Left ventricle myocardium inferior (tissue), 1 donor: ENCODE measurements at regions of chr12 and their contacts with region 1.

Region 1: GRCh38 chr12:38324896-38325295 is 8.3 kb downstream of the ALG10B start:
- DNase-seq: no peak
- H3K4me3 ChIP-seq: no peak overlapping the region
- H3K27ac ChIP-seq: no peak overlapping the region
- H3K4me1 ChIP-seq: peaks cover 4% of the 10 kb centered on the region
- H3K27me3 ChIP-seq: no peaks in the 10 kb centered on the region
- CTCF ChIP-seq: no peak

Region 2: GRCh38 chr12:38911611-38912010 is 586.7 kb after region 1 on chr12:
- intact Hi-C with region 1: loop called (anchors 10 kb)
- DNase-seq: no peak
- H3K4me3 ChIP-seq: no peak overlapping the region
- H3K27ac ChIP-seq: no peak overlapping the region
- H3K4me1 ChIP-seq: peaks cover 8% of the 10 kb centered on the region
- H3K27me3 ChIP-seq: no peaks in the 10 kb centered on the region
- CTCF ChIP-seq: peak; percentile 37

Region 3: DNA sequence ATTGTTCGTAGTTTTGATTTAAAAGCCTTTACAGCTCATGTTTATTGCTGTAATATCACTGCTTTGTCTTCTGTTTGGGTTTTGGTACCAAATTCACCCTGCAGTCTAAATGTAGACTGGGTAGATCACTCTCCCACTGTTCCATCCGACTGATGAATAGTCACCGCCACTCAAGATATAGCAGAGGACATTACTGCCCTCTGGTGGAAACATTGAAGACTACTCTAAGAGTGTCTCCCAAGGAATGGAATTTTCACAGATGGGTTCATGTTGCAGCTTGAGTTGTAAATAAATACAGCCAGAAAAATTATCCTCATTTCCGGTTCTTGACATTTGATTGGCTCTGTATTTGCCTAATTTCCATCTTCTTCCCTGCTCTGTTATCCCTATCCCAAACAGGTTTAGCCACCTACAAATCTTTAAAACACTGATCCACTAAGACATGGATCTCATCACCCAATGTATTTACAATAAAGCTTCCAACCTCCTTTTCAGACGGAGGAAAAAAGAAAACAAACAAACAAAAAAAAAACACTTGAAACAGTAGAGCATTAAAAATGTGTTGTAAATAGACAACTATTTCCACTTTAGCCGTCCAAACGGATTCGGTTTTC is 778.8 kb after region 1 on chr12:
- intact Hi-C with region 1: loop called (anchors 5 kb)
- DNase-seq: no peak
- H3K4me3 ChIP-seq: no peak overlapping the region
- H3K27ac ChIP-seq: no peak overlapping the region
- H3K4me1 ChIP-seq: no peaks in the 10 kb centered on the region
- H3K27me3 ChIP-seq: no peaks in the 10 kb centered on the region
- CTCF ChIP-seq: peak; percentile 89

Region 4: GRCh38 chr12:39272871-39273770 is 948.2 kb after region 1 on chr12:
- intact Hi-C with region 1: loop called (anchors 10 kb)
- DNase-seq: no peak
- H3K4me3 ChIP-seq: no peak overlapping the region
- H3K27ac ChIP-seq: no peak overlapping the region
- H3K4me1 ChIP-seq: no peaks in the 10 kb centered on the region
- H3K27me3 ChIP-seq: peaks cover 12% of the 10 kb centered on the region
- CTCF ChIP-seq: peak; percentile 80